HCT116 (cell line): ENCODE measurements at regions of chr1 and their contacts with region 1.

Region 1: GRCh38 chr1:94025383-94026340 is 95.3 kb downstream of the ABCA4 start:
- DNase-seq: peak; percentile 65
- ATAC-seq: peak; percentile 83
- H3K4me3 ChIP-seq: peak overlapping the region; percentile 34 to 54
- H3K27ac ChIP-seq: no peak overlapping the region
- H3K4me1 ChIP-seq: peaks cover 0 to 19% of the 10 kb centered on the region in 2 experiments; a peak in 2 of 4 replicates
- H3K27me3 ChIP-seq: no peaks in the 10 kb centered on the region
- CTCF ChIP-seq: peak; percentile 66 to 94 (median 84)
- POLR2A ChIP-seq: no peak
- RAD21 ChIP-seq: peak; percentile 84

Region 2: DNA sequence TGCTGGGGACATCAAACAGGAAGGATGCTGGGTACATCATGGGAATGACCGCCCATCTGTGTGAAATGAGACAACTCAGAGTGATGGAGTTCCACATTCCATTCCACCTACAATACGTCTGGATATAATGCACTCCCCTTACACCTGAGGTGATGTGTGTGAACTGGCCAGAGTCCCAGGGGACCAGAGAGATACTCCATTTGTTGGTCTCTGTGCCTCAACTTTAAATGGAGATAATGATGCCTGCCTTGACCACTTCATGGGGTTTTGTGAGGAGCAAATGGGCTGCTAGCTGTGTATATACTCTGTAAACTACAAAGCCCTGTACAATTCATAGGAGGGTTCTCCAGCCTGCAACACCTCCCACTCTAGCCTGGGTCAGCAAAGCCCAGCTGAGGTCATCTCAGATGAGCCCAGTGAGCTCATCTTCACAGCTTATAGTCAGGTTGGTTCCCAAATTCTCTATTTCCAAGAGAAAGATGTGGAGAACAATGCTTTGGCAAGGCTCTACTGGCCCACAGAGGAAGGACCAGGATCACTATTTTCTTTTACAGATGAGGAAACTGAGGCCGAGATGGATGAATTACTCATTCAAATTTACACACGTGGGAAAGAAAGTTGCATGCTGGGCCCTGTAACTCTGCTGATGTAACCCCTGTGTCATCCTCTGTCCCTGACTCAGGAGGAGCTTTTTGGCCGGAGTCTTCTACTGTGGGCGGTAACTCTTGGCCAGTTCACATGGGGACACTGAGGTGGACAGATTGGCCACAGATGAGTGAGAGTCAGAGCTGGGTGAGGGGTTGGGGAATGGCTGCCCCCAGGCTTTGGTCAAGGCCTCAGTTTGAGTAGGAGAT is 10.8 kb before region 1 on chr1:
- CTCF ChIA-PET with region 1: interaction called, 16 read pairs
- POLR2A ChIA-PET with region 1: interaction called, 8 read pairs
- RAD21 ChIA-PET with region 1: no interaction called
- intact Hi-C with region 1: no loop called
- DNase-seq: no peak
- ATAC-seq: no peak
- H3K4me3 ChIP-seq: no peak overlapping the region
- H3K27ac ChIP-seq: no peak overlapping the region
- H3K4me1 ChIP-seq: peaks cover 0 to 4% of the 10 kb centered on the region in 2 experiments; a peak in 1 of 4 replicates
- H3K27me3 ChIP-seq: no peaks in the 10 kb centered on the region
- CTCF ChIP-seq: no peak
- POLR2A ChIP-seq: no peak
- RAD21 ChIP-seq: no peak

Region 3: DNA sequence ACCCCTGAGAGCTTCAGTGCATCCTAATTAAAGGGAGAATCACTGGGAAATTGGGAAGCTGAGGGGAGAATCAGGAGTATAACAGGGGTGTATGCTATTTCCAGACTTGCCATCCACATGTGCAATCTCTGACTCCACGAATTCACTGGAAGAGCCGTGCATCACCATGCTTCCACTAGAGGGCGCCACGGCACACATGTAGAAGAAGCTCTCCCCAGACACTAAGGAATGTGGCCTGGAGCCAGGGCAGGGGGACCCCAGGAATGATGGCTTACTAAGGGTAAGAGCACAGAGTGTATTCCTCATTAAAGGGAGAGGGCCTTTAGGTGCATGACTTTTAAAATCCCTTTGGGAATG is 13.8 kb after region 1 on chr1:
- CTCF ChIA-PET with region 1: interaction called, 81 read pairs
- POLR2A ChIA-PET with region 1: interaction called, 5 read pairs
- RAD21 ChIA-PET with region 1: interaction called in 1 of 2 experiments, 3 read pairs
- intact Hi-C with region 1: no loop called
- DNase-seq: peak; percentile 56
- ATAC-seq: peak; percentile 89
- H3K4me3 ChIP-seq: no peak overlapping the region
- H3K27ac ChIP-seq: no peak overlapping the region
- H3K4me1 ChIP-seq: peaks cover 2 to 12% of the 10 kb centered on the region in 2 experiments; a peak in 3 of 4 replicates
- H3K27me3 ChIP-seq: no peaks in the 10 kb centered on the region
- CTCF ChIP-seq: peak; percentile 87 to 99 (median 97)
- POLR2A ChIP-seq: no peak
- RAD21 ChIP-seq: peak; percentile 82

Region 4: DNA sequence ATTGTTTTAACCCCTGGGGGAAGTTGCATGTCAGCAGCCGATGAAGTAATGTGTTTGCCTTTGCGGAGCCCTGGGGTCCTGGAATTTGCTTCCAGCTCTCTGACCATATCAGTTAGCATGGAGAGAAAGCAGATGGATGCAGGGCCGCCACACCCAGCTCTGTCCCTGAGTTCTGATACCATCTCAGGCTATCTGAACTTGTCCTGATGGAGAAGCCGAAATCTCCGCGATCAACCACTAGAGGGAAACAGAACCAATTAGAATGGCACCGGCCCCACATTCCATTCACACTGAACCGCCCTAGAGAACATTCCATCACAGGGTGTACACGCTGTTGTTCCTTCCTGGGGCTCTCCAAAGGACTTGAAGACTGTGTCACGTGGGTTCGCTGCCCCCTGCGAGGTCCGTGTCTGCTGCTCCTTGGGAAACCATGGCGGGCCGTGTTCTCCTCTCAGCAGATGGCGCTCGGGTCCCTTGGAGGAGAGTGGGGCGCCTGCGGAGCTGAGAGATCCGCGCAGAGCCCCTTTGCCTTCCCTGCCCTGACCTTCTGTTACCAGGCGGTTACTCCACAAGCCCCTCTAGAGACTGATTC is 19.9 kb after region 1 on chr1:
- CTCF ChIA-PET with region 1: interaction called, 81 read pairs
- POLR2A ChIA-PET with region 1: no interaction called
- RAD21 ChIA-PET with region 1: interaction called, 3 read pairs
- intact Hi-C with region 1: no loop called
- DNase-seq: peak; percentile 91
- ATAC-seq: peak; percentile 93
- H3K4me3 ChIP-seq: no peak overlapping the region
- H3K27ac ChIP-seq: peak overlapping the region; percentile 27; the same call in 1 of the 2 replicates
- H3K4me1 ChIP-seq: peaks cover 16 to 20% of the 10 kb centered on the region in 2 experiments; a peak in 3 of 4 replicates
- H3K27me3 ChIP-seq: no peaks in the 10 kb centered on the region
- CTCF ChIP-seq: peak; percentile 71 to 98 (median 83)
- POLR2A ChIP-seq: no peak
- RAD21 ChIP-seq: peak; percentile 86

Region 5: GRCh38 chr1:94061513-94062443 is 36.1 kb after region 1 on chr1:
- CTCF ChIA-PET with region 1: interaction called, 30 read pairs
- POLR2A ChIA-PET with region 1: no interaction called
- RAD21 ChIA-PET with region 1: no interaction called
- intact Hi-C with region 1: no loop called
- DNase-seq: peak; percentile 67
- ATAC-seq: peak; percentile 94
- H3K4me3 ChIP-seq: no peak overlapping the region
- H3K27ac ChIP-seq: no peak overlapping the region
- H3K4me1 ChIP-seq: peaks cover 18 to 36% of the 10 kb centered on the region in 2 experiments
- H3K27me3 ChIP-seq: no peaks in the 10 kb centered on the region
- CTCF ChIP-seq: peak; percentile 90 to 96 (median 92)
- POLR2A ChIP-seq: no peak
- RAD21 ChIP-seq: peak; percentile 99

Region 6: GRCh38 chr1:94072840-94073522 is 47.3 kb after region 1 on chr1:
- CTCF ChIA-PET with region 1: no interaction called
- POLR2A ChIA-PET with region 1: no interaction called
- RAD21 ChIA-PET with region 1: no interaction called
- intact Hi-C with region 1: no loop called
- DNase-seq: no peak
- ATAC-seq: no peak
- H3K4me3 ChIP-seq: no peak overlapping the region
- H3K27ac ChIP-seq: no peak overlapping the region
- H3K4me1 ChIP-seq: peaks cover 24 to 26% of the 10 kb centered on the region in 2 experiments
- H3K27me3 ChIP-seq: no peaks in the 10 kb centered on the region
- CTCF ChIP-seq: no peak
- POLR2A ChIP-seq: no peak
- RAD21 ChIP-seq: no peak

Region 7: DNA sequence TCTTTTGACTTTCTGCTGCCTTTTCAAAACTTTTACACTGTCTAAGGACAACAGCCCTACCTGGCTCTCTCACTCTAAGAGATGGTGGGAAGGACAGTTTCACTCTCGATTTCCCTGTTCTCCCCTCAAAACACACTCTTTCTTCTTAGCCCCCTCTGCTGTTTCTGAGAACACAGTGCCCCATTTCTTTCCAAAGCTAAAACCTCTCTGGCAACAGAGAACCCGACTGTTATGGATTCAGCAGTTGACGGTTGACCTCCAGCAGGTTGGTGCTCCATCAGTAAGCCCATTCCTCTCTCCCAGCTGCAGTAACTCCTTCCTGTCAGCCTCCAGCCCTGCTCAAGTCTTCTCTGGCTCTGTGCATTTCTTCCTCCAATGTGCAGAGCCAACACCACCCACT is 304.3 kb after region 1 on chr1:
- CTCF ChIA-PET with region 1: interaction called, 338 read pairs
- POLR2A ChIA-PET with region 1: interaction called, 3 read pairs
- RAD21 ChIA-PET with region 1: interaction called, 3 to 42 read pairs
- intact Hi-C with region 1: no loop called
- DNase-seq: no peak
- ATAC-seq: peak; percentile 21
- H3K4me3 ChIP-seq: peak overlapping the region in 1 of 2 experiments; percentile 5; a peak in 1 of 4 replicates
- H3K27ac ChIP-seq: peak overlapping the region; percentile 90
- H3K4me1 ChIP-seq: peaks cover 65 to 89% of the 10 kb centered on the region in 2 experiments
- H3K27me3 ChIP-seq: no peaks in the 10 kb centered on the region
- CTCF ChIP-seq: peak; percentile 58 to 87 (median 63)
- POLR2A ChIP-seq: no peak
- RAD21 ChIP-seq: peak; percentile 97

Region 8: GRCh38 chr1:94463765-94464330 is 438.2 kb after region 1 on chr1:
- CTCF ChIA-PET with region 1: interaction called, 12 read pairs
- POLR2A ChIA-PET with region 1: no interaction called
- RAD21 ChIA-PET with region 1: no interaction called
- intact Hi-C with region 1: loop called (anchors 1 kb)
- DNase-seq: peak; percentile 49
- ATAC-seq: peak; percentile 84
- H3K4me3 ChIP-seq: no peak overlapping the region
- H3K27ac ChIP-seq: no peak overlapping the region
- H3K4me1 ChIP-seq: no peaks in the 10 kb centered on the region
- H3K27me3 ChIP-seq: no peaks in the 10 kb centered on the region
- CTCF ChIP-seq: peak; percentile 55 to 79 (median 66); a peak in 5 of 6 replicates
- POLR2A ChIP-seq: no peak
- RAD21 ChIP-seq: peak; percentile 86